SK-N-SH (cell line): ENCODE measurements at regions of chr14 and their contacts with region 1.

Region 1: GRCh38 chr14:22570132-22570949 is 18.7 kb downstream of the DAD1 start:
- DNase-seq: peak; percentile 71
- H3K4me3 ChIP-seq: peak overlapping the region in 1 of 2 experiments; percentile 1; a peak in 1 of 4 replicates
- H3K27ac ChIP-seq: peak overlapping the region; percentile 7 to 32; a peak in 1 of 4 replicates
- H3K4me1 ChIP-seq: peaks cover 0 to 18% of the 10 kb centered on the region in 2 experiments; a peak in 1 of 4 replicates
- H3K27me3 ChIP-seq: no peaks in the 10 kb centered on the region
- CTCF ChIP-seq: peak; percentile 89
- EP300 ChIP-seq: no peak
- RAD21 ChIP-seq: peak; percentile 87

Region 2: GRCh38 chr14:22386924-22387775 is 183.2 kb before region 1 on chr14:
- CTCF ChIA-PET with region 1: interaction called, 19 read pairs
- POLR2A ChIA-PET with region 1: no interaction called
- DNase-seq: peak; percentile 73
- H3K4me3 ChIP-seq: no peak overlapping the region; a peak in 1 of 4 replicates
- H3K27ac ChIP-seq: no peak overlapping the region
- H3K4me1 ChIP-seq: no peaks in the 10 kb centered on the region; a peak in 2 of 4 replicates
- H3K27me3 ChIP-seq: peaks cover 51% of the 10 kb centered on the region
- CTCF ChIP-seq: peak; percentile 88
- EP300 ChIP-seq: no peak
- RAD21 ChIP-seq: peak; percentile 91

Region 3: DNA sequence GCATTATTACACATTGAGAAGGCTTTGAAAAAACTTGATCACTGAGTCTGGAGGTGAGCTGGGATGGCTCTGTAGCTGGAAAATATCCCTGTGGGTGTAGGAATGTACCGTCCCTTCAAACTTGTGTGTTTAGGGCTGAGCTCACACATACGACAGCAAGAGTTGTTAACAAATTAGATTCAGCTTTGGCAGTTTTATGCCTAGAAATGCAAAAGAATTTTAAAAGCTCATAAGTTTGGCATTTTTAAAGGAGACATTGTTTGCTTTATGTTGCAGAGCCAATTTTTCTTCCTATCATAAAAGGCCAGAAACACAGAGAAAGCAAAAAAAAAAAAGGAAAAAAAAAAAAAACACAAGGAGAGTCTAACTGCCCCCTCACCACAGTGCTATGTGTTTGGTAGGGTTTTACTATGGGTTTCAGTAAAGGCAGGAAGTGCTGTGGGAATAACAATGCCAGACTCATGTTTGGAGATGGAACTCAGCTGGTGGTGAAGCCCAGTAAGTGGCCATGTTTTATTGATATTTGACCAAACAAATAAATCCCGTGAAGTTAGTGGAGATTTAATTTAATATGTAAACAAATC is 59.7 kb before region 1 on chr14:
- CTCF ChIA-PET with region 1: no interaction called
- POLR2A ChIA-PET with region 1: no interaction called
- DNase-seq: no peak
- H3K4me3 ChIP-seq: no peak overlapping the region
- H3K27ac ChIP-seq: no peak overlapping the region
- H3K4me1 ChIP-seq: peaks cover 4 to 32% of the 10 kb centered on the region in 2 experiments; a peak in 2 of 4 replicates
- H3K27me3 ChIP-seq: no peaks in the 10 kb centered on the region; the same call in none of the 2 replicates
- CTCF ChIP-seq: no peak
- EP300 ChIP-seq: no peak
- RAD21 ChIP-seq: no peak

Region 4: GRCh38 chr14:22589096-22589839 is 18.9 kb after region 1 on chr14 and contains the start of gene DAD1:
- CTCF ChIA-PET with region 1: interaction called, 65 read pairs
- POLR2A ChIA-PET with region 1: no interaction called
- DNase-seq: peak; percentile 97
- H3K4me3 ChIP-seq: peak within 1 kb of the TSS; percentile 92 to 99
- H3K27ac ChIP-seq: peak within 1 kb of the TSS; percentile 82 to 93
- H3K4me1 ChIP-seq: peaks cover 9 to 12% of the 10 kb centered on the region in 2 experiments; a peak in 2 of 4 replicates
- H3K27me3 ChIP-seq: peaks cover 14% of the 10 kb centered on the region; the same call in 1 of the 2 replicates
- CTCF ChIP-seq: no peak
- EP300 ChIP-seq: no peak
- RAD21 ChIP-seq: no peak
- polyA plus RNA-seq, gene DAD1: 406 and 478 TPM in 2 replicates

Region 5: DNA sequence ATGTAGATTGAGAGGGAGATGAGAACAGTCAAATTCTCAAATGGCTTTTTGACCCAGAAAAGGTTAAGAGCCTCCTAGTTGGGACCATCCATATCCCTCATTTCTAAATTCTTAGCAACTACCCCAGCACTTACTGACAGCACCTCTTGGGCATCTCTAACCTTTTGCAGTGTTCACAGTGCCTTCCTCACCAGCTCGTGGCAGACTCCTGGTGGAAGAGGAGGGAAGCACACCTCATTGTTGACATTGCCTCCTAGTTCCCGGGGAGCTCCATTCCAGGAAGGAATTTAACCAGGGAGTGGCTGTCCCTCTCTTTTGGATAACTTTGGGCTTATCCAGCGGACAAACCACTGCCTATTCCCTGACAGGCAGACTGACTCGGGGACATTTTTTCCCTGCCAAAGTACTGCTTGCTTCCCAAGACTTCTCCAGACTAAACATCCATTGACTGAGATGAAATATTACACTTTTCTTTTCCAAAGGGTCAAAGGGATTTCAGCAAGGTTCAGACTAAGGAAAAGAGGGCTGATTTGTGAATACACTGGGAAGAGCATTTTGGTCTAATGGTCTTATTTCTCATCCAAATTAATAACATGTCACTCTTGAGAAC is 82.8 kb after region 1 on chr14:
- CTCF ChIA-PET with region 1: interaction called, 89 read pairs
- POLR2A ChIA-PET with region 1: no interaction called
- DNase-seq: peak; percentile 67
- H3K4me3 ChIP-seq: no peak overlapping the region; a peak in 1 of 4 replicates
- H3K27ac ChIP-seq: no peak overlapping the region
- H3K4me1 ChIP-seq: no peaks in the 10 kb centered on the region
- H3K27me3 ChIP-seq: peaks cover 21% of the 10 kb centered on the region; the same call in 1 of the 2 replicates
- CTCF ChIP-seq: peak; percentile 71
- EP300 ChIP-seq: no peak
- RAD21 ChIP-seq: peak; percentile 81

Region 6: DNA sequence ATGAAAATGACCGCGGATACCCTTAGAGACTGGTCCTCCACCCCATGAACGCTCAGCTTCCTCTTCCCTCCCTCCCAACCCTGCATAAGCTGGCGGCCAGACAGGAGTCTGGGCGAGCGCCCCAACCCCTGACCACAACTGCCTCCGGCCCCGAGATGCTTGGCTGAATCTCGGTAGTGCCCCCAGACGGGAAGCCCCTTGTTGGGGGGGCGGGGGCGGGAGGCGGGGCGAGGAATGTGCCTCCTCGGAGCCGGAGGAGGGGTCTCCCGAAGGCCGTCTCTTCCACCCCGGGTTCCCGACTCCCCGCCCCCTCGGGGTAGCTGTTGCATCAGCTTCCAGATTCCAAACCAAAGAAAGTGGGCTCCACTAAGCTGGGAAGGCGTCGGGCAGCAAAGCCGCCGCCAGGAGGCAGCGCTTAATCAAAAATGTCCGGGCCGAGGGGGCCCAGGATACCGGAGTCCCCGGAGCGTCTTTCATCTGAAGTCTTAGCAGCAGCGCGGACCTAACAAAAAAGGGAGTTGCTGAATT is 252.3 kb after region 1 on chr14:
- CTCF ChIA-PET with region 1: interaction called, 18 read pairs
- POLR2A ChIA-PET with region 1: no interaction called
- DNase-seq: peak; percentile 91
- H3K4me3 ChIP-seq: peak overlapping the region in 1 of 2 experiments; percentile 44; a peak in 1 of 4 replicates
- H3K27ac ChIP-seq: peak overlapping the region in 1 of 2 experiments; percentile 15; a peak in 1 of 4 replicates
- H3K4me1 ChIP-seq: peaks cover 8 to 13% of the 10 kb centered on the region in 2 experiments; a peak in 2 of 4 replicates
- H3K27me3 ChIP-seq: no peaks in the 10 kb centered on the region
- CTCF ChIP-seq: peak; percentile 84
- EP300 ChIP-seq: no peak
- RAD21 ChIP-seq: peak; percentile 95

Region 7: GRCh38 chr14:22865424-22866405 is 295.4 kb after region 1 on chr14:
- CTCF ChIA-PET with region 1: interaction called, 10 read pairs
- POLR2A ChIA-PET with region 1: no interaction called
- DNase-seq: peak; percentile 29
- H3K4me3 ChIP-seq: no peak overlapping the region
- H3K27ac ChIP-seq: no peak overlapping the region
- H3K4me1 ChIP-seq: peaks cover 3 to 5% of the 10 kb centered on the region in 2 experiments; a peak in 3 of 4 replicates
- H3K27me3 ChIP-seq: no peaks in the 10 kb centered on the region
- CTCF ChIP-seq: peak; percentile 40
- EP300 ChIP-seq: no peak
- RAD21 ChIP-seq: no peak